Activated CD8-positive, alpha-beta T cell treated with anti-CD3 and anti-CD28 coated beads for 36 hours (primary cell): ENCODE measurements at regions of chr11 and their contacts with region 1.

Region 1: GRCh38 chr11:65418711-65419459 is 3.7 kb upstream of the NEAT1 start:
- DNase-seq: peak; percentile 98
- ATAC-seq: peak; percentile 53
- H3K4me3 Mint-ChIP-seq: peak overlapping the region; percentile 89
- H3K27ac Mint-ChIP-seq: peak overlapping the region; percentile 98
- H3K4me1 Mint-ChIP-seq: peaks cover 36% of the 10 kb centered on the region
- H3K27me3 Mint-ChIP-seq: peaks cover 8% of the 10 kb centered on the region
- CTCF ChIP-seq: no peak

Region 2: GRCh38 chr11:65382033-65382807 is 36.7 kb before region 1 on chr11 and contains the start of gene SLC25A45:
- CTCF ChIA-PET with region 1: interaction called, 37 read pairs
- POLR2A ChIA-PET with region 1: interaction called, 339 read pairs
- intact Hi-C with region 1: no loop called
- DNase-seq: peak; percentile 96
- ATAC-seq: peak; percentile 85
- H3K4me3 Mint-ChIP-seq: peak within 1 kb of the TSS; percentile 78
- H3K27ac Mint-ChIP-seq: peak within 1 kb of the TSS; percentile 97
- H3K4me1 Mint-ChIP-seq: peaks cover 44% of the 10 kb centered on the region
- H3K27me3 Mint-ChIP-seq: no peaks in the 10 kb centered on the region
- CTCF ChIP-seq: peak; percentile 91
- total RNA-seq, gene SLC25A45: 12.8 to 14.4 TPM

Region 3: GRCh38 chr11:65403607-65404121 is 15.2 kb before region 1 on chr11:
- CTCF ChIA-PET with region 1: interaction called, 7 read pairs
- POLR2A ChIA-PET with region 1: interaction called, 24 read pairs
- intact Hi-C with region 1: no loop called
- DNase-seq: no peak
- ATAC-seq: no peak
- H3K4me3 Mint-ChIP-seq: no peak overlapping the region
- H3K27ac Mint-ChIP-seq: no peak overlapping the region
- H3K4me1 Mint-ChIP-seq: peaks cover 6% of the 10 kb centered on the region
- H3K27me3 Mint-ChIP-seq: no peaks in the 10 kb centered on the region
- CTCF ChIP-seq: no peak

Region 4: GRCh38 chr11:65471410-65471762 is 52.5 kb after region 1 on chr11:
- CTCF ChIA-PET with region 1: interaction called, 34 read pairs
- POLR2A ChIA-PET with region 1: interaction called, 391 read pairs
- intact Hi-C with region 1: no loop called
- DNase-seq: no peak
- ATAC-seq: no peak
- H3K4me3 Mint-ChIP-seq: peak overlapping the region; percentile 72
- H3K27ac Mint-ChIP-seq: peak overlapping the region; percentile 99
- H3K4me1 Mint-ChIP-seq: peaks cover 26% of the 10 kb centered on the region
- H3K27me3 Mint-ChIP-seq: no peaks in the 10 kb centered on the region
- CTCF ChIP-seq: peak; percentile 37

Region 5: GRCh38 chr11:65487413-65488272 is 68.8 kb after region 1 on chr11:
- CTCF ChIA-PET with region 1: interaction called, 12 read pairs
- POLR2A ChIA-PET with region 1: interaction called, 4,842 read pairs
- intact Hi-C with region 1: no loop called
- DNase-seq: peak; percentile 58
- ATAC-seq: peak; percentile 22
- H3K4me3 Mint-ChIP-seq: peak overlapping the region; percentile 0
- H3K27ac Mint-ChIP-seq: peak overlapping the region; percentile 46
- H3K4me1 Mint-ChIP-seq: peaks cover 40% of the 10 kb centered on the region
- H3K27me3 Mint-ChIP-seq: no peaks in the 10 kb centered on the region
- CTCF ChIP-seq: no peak

Region 6: DNA sequence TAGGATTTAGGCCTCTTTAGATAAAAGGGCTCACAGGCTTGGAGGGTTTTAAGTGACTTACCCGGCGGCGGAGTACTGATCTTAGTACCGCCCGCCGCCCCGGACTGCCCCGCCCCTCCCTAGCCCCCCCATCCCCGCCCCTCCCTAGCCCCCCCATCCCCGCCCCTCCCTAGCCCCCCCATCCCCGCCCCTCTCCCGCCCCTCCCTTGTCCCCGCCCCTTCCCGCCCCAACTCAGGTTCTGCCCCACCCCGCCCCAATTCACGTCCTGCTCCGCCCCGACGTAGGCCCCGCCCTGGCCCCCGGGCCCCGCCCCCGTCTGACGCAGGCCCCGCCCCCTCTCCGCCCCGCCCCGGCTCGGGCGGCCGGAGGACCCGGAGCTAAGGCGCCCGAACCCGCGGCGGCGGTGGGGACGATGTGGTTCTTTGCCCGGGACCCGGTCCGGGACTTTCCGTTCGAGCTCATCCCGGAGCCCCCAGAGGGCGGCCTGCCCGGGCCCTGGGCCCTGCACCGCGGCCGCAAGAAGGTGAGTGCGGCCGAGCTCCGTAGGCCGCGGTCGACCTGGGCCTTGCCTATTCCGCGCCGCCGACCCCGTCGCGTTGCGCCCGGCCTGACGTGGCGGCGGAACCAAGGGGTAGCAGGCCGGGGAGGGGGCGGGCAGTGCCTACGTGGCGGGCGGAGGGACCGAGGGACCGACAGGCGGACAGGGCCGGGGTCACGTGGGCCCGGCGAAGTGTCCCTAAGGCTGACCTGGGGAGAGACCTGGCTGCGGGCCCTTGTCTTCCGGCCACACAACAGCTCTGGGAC is 106.1 kb after region 1 on chr11 and contains the start of gene SCYL1:
- CTCF ChIA-PET with region 1: interaction called, 5 read pairs
- POLR2A ChIA-PET with region 1: interaction called, 4,842 read pairs
- intact Hi-C with region 1: no loop called
- DNase-seq: peak; percentile 79
- ATAC-seq: peak; percentile 93
- H3K4me3 Mint-ChIP-seq: peak within 1 kb of the TSS; percentile 93
- H3K27ac Mint-ChIP-seq: peak within 1 kb of the TSS; percentile 94
- H3K4me1 Mint-ChIP-seq: peaks cover 61% of the 10 kb centered on the region
- H3K27me3 Mint-ChIP-seq: no peaks in the 10 kb centered on the region
- CTCF ChIP-seq: no peak
- total RNA-seq, gene SCYL1: 71.5 to 76.8 TPM

Region 7: DNA sequence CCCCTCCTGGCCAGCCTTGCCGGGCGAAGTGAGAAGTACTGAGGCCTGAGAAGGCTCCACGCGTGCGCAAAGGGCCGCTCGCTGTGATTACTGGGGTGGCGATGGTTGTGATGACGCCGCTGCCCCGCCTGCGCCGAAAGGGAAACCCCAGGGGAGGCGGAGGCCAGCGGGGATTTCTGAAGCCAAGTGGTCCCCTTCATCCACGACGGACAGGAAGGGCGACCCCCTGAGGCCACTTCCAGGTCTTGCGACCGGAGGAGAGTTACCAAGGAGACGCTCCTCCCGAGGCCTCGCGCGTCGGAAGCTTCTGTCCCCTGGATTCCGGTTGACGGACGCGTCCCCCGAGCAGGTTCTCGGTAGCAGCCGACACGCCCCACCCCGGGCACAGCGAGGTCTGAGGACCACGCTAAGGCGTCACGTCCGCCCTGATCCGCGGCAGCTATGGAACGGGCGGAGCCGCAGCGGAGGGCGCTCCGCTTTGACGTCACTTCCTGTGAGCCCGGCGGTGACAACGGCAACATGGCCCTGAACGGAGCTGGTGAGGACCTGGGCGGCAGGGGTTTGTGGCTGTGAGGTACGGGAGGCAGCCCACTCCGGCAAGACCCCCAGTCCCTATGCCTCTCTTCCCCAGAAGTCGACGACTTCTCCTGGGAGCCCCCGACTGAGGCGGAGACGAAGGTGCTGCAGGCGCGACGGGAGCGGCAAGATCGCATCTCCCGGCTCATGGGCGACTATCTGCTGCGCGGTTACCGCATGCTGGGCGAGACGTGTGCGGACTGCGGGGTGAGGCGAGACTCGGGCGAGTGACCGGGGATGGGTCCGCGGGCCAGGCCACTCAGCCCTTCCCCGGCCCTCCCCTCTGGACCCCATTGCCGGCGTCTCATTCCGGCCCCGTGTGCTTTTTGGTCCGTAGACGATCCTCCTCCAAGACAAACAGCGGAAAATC is 151.4 kb after region 1 on chr11 and contains the start of gene ZNRD2:
- CTCF ChIA-PET with region 1: no interaction called
- POLR2A ChIA-PET with region 1: interaction called, 44 read pairs
- intact Hi-C with region 1: no loop called
- DNase-seq: peak; percentile 99
- ATAC-seq: peak; percentile 77
- H3K4me3 Mint-ChIP-seq: peak within 1 kb of the TSS; percentile 93
- H3K27ac Mint-ChIP-seq: peak within 1 kb of the TSS; percentile 97
- H3K4me1 Mint-ChIP-seq: peaks cover 57% of the 10 kb centered on the region
- H3K27me3 Mint-ChIP-seq: no peaks in the 10 kb centered on the region
- CTCF ChIP-seq: peak; percentile 27
- total RNA-seq, gene ZNRD2: 54.3 to 54.7 TPM